HEK293T (cell line): ENCODE measurements at regions of chr19 and their contacts with region 1.

Region 1: DNA sequence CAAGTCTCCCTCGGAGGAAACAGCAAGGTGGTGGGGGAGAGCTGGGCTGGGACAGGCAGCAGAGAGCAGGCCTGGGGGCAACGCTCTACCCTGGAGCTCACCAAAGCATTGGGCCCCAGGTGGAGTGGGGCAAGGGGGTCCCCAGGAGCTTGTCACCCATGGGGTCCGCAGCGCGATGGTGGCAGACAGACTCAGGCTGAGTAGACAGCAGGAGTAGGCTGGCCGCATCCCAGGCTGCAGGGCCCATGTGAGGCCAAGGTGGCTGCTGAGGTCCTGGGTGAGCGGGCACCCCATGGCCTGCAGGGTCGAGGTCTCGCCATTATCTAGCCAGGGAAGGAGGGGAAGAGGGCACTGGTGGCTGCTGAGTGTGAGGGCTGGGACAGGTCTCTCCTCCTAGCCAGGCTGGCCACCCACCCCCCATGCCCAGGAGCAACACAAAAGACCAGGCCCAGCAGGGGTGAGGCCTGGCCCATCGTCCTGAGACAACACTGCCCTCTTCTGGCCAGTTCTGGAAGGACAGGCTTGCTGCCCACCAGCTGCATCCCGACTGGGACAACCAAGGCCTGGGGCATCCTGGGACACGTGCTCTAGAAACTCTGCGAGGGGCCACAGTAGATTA is 33.1 kb downstream of the CEBPG start:
- DNase-seq: peak; percentile 88

Region 2: DNA sequence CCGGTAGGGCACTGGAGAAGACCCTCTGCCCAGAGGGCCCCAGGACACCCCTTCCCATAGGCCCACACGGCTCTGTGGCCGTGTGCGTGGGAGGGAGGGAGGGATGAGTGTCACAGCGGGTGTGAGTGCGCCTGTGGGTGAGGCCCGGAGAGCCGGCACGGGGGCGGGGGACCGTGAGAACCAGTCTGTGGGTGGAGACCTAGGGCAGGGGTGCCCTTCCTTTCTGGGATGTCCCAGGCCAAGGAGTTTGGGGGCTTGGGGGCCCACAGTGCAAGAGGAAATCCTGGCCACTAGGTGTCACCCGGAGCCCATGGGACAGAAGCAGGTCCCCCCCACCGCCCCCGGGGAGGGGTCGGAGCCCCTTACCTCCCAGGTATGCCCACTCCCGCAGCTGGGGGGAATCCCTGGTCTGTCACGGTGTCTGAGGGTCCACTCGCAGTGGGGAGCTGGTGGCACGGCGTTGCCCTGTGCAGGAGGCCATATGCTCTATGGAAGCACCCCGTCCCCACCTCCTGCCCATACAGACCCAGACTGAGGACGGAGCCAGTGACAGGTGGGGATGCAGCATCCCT is 165.0 kb before region 1 on chr19:
- CTCF ChIA-PET with region 1: interaction called, 10 read pairs
- POLR2A ChIA-PET with region 1: no interaction called
- DNase-seq: peak; percentile 39

Region 3: DNA sequence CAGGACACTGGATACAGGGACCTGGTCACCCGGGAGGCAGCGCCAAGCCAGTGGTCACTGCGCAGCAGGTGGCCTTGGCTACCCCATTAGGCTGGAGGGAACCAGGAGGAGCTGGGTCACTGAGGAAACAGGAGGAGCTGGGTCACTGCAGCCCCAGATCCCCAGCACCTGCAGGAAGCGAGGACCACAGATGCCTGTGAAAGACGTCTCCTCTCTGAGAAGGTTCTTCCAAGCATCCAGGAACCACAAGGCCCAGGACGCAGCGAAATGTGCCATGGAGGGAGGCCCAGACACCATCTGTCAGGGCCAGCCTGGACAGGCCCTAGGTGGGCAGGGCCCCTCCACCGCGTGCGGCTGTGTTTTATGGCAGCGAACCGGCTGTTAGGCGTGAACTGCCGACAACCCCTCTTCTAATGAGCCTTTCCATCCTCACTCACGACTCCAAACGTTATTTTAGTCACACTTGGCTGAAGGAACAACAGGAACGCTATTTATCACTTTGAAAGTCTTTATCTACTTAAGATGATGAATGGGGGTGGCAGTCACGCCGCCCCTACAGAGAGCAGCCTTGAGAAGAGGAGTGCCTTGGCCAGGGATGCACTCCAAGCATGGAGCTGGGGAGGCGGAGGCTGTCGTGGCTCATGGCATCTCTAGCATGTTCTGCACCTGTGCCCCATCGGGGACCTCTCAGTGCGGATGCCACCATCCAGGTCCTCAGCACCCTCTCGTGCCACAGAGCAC is 20.2 kb after region 1 on chr19:
- CTCF ChIA-PET with region 1: no interaction called
- POLR2A ChIA-PET with region 1: no interaction called
- DNase-seq: no peak

Region 4: GRCh38 chr19:33438007-33438671 is 31.5 kb after region 1 on chr19:
- CTCF ChIA-PET with region 1: no interaction called
- POLR2A ChIA-PET with region 1: no interaction called
- DNase-seq: no peak

Region 5: GRCh38 chr19:33521480-33522370 is 115.1 kb after region 1 on chr19 and contains the start of gene PEPD:
- CTCF ChIA-PET with region 1: no interaction called
- POLR2A ChIA-PET with region 1: no interaction called
- DNase-seq: peak; percentile 99